Naive thymus-derived CD4-positive, alpha-beta T cell (primary cell): ENCODE measurements at regions of chr1 and their contacts with region 1.

Region 1: DNA sequence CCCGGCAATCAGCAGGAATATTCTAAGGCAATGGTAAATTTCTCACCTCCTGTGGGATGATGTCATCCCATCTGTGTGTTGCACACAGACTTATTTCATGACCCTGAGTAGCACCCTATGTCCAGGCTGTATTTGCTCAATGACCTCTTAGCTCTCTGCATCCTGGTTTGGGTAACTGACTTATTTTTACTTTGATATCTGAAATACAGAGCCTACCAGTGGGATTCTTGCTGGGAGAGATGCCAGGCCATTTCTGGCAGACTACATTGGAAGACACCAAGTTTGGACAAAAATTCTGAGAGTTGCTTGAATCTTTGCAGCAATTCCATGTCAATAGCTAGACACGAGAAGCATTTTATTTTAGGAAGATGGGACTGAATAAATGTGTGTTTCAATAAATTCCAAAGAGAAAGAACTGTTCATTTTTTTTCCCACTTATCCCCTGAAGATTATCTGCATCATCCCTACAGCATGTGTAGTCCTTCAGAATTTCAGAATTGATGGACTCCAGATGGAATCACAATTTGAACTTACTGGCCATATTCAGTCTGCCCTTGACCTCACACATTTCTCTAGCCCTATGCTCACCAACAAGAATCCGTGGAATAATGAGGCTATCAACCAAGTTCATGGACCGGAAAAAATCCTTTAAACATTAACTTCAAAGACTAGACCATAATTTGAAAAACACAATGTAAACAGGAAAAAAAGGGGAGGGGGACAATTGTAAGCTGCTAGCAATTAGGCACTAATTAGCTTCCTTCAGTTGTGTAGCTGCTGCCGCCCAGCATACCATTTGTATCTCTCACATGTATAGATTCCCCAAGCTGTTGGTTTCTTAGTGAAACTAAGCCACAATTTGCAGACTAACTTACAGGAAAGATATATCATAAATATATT is 226.5 kb downstream of the HMCN1 start:
- DNase-seq: no peak
- ATAC-seq: no peak
- H3K4me3 ChIP-seq: no peak overlapping the region
- H3K4me3 Mint-ChIP-seq: no peak overlapping the region
- H3K27ac ChIP-seq: no peak overlapping the region
- H3K27ac Mint-ChIP-seq: no peak overlapping the region
- H3K4me1 ChIP-seq: no peaks in the 10 kb centered on the region
- H3K4me1 Mint-ChIP-seq: no peaks in the 10 kb centered on the region
- H3K27me3 ChIP-seq: no peaks in the 10 kb centered on the region
- H3K27me3 Mint-ChIP-seq: peaks cover 4 to 15% (median 8%) of the 10 kb centered on the region in 5 donors

Region 2: GRCh38 chr1:185942961-185943360 is 17.7 kb before region 1 on chr1:
- CTCF ChIA-PET with region 1: no interaction called
- POLR2A ChIA-PET with region 1: no interaction called
- intact Hi-C with region 1: loop called in 1 of 2 experiments (anchors 1 kb)
- DNase-seq: no peak
- ATAC-seq: no peak
- H3K4me3 ChIP-seq: no peak overlapping the region
- H3K4me3 Mint-ChIP-seq: no peak overlapping the region
- H3K27ac ChIP-seq: no peak overlapping the region
- H3K27ac Mint-ChIP-seq: no peak overlapping the region
- H3K4me1 ChIP-seq: no peaks in the 10 kb centered on the region
- H3K4me1 Mint-ChIP-seq: no peaks in the 10 kb centered on the region
- H3K27me3 ChIP-seq: no peaks in the 10 kb centered on the region
- H3K27me3 Mint-ChIP-seq: peaks cover 0 to 7% (median 0%) of the 10 kb centered on the region in 5 donors

Region 3: GRCh38 chr1:186026946-186027345 is 66.3 kb after region 1 on chr1:
- CTCF ChIA-PET with region 1: no interaction called
- POLR2A ChIA-PET with region 1: no interaction called
- intact Hi-C with region 1: loop called in 1 of 2 experiments (anchors 10 kb)
- DNase-seq: no peak
- ATAC-seq: no peak
- H3K4me3 ChIP-seq: no peak overlapping the region
- H3K4me3 Mint-ChIP-seq: no peak overlapping the region
- H3K27ac ChIP-seq: no peak overlapping the region
- H3K27ac Mint-ChIP-seq: no peak overlapping the region
- H3K4me1 ChIP-seq: no peaks in the 10 kb centered on the region
- H3K4me1 Mint-ChIP-seq: no peaks in the 10 kb centered on the region
- H3K27me3 ChIP-seq: no peaks in the 10 kb centered on the region
- H3K27me3 Mint-ChIP-seq: peaks cover 0 to 4% (median 0%) of the 10 kb centered on the region in 5 donors